PC-9 (cell line): ENCODE measurements at regions of chr2 and their contacts with region 1.

Region 1: DNA sequence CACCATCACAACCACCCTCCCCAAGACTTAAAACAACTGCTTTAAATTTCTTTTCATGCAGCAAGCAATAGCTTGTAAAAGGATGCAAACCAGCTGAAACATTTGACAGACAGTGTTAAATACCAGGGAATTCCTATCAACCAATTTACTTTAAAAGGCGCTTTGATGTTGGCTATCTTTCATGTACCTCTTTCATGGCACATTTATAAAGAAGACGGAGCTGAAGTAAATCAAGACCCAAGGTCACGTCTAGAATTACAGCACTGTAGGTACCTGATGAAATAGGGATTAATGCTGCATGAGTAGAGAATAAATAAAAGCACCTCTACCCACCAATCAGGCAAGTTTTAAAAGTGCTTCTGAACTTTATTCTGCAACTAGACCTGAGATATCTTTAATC is 78.9 kb downstream of the SRBD1 start:
- DNase-seq: no peak
- H3K4me3 ChIP-seq: no peak overlapping the region
- H3K27ac ChIP-seq: no peak overlapping the region
- H3K4me1 ChIP-seq: no peaks in the 10 kb centered on the region
- H3K27me3 ChIP-seq: no peaks in the 10 kb centered on the region
- CTCF ChIP-seq: no peak

Region 2: DNA sequence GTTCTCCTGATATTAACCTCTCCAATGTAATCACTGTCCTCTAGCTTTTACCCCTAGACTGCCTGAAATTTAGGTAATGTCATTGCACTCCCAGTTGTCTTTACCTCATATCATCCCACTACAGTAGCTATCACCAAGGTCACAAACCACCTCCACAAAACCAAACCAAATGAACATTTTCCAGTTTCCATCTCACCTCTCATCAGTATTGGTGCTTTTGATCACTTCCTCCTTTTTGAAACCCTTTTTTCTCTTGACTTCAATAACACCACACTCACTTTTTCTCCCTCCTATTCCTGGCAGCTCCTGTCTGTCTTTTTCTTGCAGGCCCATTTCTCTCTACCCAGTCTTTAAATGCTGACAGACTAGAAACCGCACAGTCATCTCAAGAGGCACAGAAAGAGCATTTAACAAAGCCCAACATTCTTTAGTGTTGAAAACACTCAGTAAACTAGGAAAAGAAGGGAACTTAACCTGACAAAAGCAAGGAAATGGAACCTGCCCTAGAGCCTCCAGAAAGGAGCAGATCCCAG is 427.1 kb before region 1 on chr2:
- CTCF ChIA-PET with region 1: no interaction called
- POLR2A ChIA-PET with region 1: no interaction called
- intact Hi-C with region 1: no loop called
- DNase-seq: no peak
- H3K4me3 ChIP-seq: no peak overlapping the region
- H3K27ac ChIP-seq: no peak overlapping the region
- H3K4me1 ChIP-seq: peaks cover 43% of the 10 kb centered on the region
- H3K27me3 ChIP-seq: no peaks in the 10 kb centered on the region
- CTCF ChIP-seq: no peak

Region 3: DNA sequence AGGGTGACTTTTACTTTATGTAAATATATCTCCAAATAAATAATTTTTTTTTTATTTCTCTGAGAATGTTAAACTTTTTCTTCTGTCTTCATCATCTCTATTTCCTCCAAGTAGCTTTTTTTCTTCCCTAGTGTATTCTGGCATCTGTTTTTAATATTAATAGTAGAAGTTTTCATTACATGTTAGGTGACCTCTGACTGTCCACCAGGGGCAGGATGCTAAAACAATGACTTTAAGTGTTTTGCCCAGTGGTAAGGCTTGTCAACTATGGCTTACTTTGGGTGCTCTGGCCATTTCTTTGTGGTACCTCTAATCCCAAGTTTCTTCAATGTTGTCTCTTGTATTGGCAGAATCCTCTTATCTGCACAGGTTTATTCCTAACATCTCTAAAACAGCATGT is 48.2 kb before region 1 on chr2:
- CTCF ChIA-PET with region 1: no interaction called
- POLR2A ChIA-PET with region 1: no interaction called
- intact Hi-C with region 1: no loop called
- DNase-seq: no peak
- H3K4me3 ChIP-seq: no peak overlapping the region
- H3K27ac ChIP-seq: no peak overlapping the region
- H3K4me1 ChIP-seq: no peaks in the 10 kb centered on the region
- H3K27me3 ChIP-seq: no peaks in the 10 kb centered on the region
- CTCF ChIP-seq: peak; percentile 62

Region 4: DNA sequence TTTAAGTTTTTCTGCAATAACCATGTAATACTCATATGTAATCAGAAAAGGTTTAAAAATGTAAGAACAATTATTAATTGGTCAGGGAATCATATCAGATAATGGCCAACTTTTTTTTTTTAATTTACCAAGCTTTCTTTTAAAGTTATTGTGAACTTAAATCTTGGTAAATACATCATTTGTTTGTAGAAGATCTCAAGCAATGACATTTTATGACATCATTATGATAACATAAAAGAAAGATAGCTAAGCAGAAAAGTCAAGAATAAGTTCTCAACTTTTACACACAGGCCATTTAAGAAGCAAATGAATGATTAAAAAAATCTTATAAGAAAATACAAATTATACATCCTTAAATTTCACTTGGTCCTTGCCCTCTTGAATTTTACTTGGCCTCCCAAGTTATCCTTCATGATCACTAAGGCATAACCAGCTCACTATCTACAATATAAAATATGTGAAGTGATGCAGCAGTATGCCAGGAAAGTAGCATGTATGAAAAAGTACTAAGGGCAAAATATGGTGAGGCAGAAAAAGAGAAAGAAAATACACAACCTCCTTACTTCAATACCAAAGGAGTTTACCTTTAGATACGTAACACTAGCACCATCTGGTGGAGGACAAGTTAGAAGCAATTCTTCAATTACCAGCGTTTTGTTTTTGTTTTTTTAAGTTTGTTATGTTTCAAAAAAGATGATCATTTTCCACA is 37.8 kb before region 1 on chr2:
- CTCF ChIA-PET with region 1: no interaction called
- POLR2A ChIA-PET with region 1: interaction called, 10 read pairs
- intact Hi-C with region 1: no loop called
- DNase-seq: peak; percentile 17 to 68
- H3K4me3 ChIP-seq: no peak overlapping the region
- H3K27ac ChIP-seq: no peak overlapping the region
- H3K4me1 ChIP-seq: no peaks in the 10 kb centered on the region
- H3K27me3 ChIP-seq: no peaks in the 10 kb centered on the region
- CTCF ChIP-seq: peak; percentile 96